Mammary epithelial cell (primary cell): ENCODE measurements at regions of chr12 and their contacts with region 1.

Region 1: DNA sequence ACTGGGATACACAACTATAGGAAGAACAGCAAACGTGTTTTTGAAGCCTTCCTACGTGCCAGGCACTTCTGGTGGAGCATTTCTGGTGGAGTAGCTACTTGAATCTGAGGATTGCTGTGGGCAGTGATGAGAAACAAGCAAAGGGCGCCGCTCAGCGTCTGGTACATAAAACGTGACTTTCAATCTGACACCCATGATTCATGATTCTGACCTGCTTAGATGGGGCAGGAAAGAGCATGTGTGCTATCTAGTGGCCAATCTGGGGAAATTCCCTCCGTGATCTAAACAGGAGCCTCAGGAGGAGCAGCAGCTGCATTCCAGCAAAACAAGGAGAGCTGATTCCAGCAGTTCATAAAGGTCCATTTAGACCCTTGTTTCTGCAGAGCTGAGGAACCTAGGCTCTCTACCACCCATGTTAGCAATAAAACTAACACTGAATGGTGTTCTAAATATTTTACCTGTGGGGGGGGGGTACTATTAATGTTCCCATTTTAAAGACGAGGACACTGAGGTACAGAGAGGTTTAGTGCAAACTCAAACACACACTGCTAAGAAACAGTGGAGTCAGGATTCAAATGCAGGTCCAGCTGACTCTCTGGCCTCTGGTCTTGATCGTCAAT is 37.8 kb downstream of the PAH start:
- DNase-seq: peak; percentile 79
- H3K4me3 ChIP-seq: no peak overlapping the region
- H3K27ac ChIP-seq: no peak overlapping the region
- H3K4me1 ChIP-seq: no peaks in the 10 kb centered on the region
- H3K27me3 ChIP-seq: peaks cover 2% of the 10 kb centered on the region
- CTCF ChIP-seq: peak; percentile 46 to 57

Region 2: GRCh38 chr12:101782273-101782731 is 1097.0 kb before region 1 on chr12:
- CTCF ChIA-PET with region 1: interaction called, 10 read pairs
- dilution Hi-C with region 1: no loop called
- in situ Hi-C with region 1: no loop called
- intact Hi-C with region 1: no loop called
- DNase-seq: no peak
- H3K4me3 ChIP-seq: no peak overlapping the region
- H3K27ac ChIP-seq: no peak overlapping the region
- H3K4me1 ChIP-seq: no peaks in the 10 kb centered on the region
- H3K27me3 ChIP-seq: no peaks in the 10 kb centered on the region
- CTCF ChIP-seq: no peak

Region 3: DNA sequence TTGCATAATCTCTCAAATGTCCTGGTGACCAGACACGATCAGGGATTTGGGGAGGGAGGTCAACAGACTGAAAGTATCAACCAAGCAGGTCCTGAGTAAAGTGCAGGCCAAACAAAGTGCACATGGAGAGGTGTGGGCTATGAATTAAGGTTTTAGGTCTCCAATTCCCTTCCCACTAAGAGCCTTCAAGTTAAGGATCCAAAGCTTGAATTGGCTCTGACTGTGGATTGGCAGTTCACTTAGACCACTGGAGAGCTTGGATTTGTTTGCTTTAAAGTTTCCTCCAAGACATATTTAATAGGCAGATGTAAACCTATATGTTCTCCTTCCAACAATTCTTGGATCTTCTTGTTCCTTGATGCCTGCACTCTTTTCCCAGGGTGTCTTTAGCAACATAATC is 269.3 kb before region 1 on chr12:
- CTCF ChIA-PET with region 1: no interaction called
- dilution Hi-C with region 1: no loop called
- in situ Hi-C with region 1: no loop called
- intact Hi-C with region 1: no loop called
- DNase-seq: no peak
- H3K4me3 ChIP-seq: no peak overlapping the region
- H3K27ac ChIP-seq: no peak overlapping the region
- H3K4me1 ChIP-seq: no peaks in the 10 kb centered on the region
- H3K27me3 ChIP-seq: no peaks in the 10 kb centered on the region
- CTCF ChIP-seq: no peak

Region 4: GRCh38 chr12:102993537-102993936 is 114.3 kb after region 1 on chr12:
- CTCF ChIA-PET with region 1: no interaction called
- dilution Hi-C with region 1: no loop called
- in situ Hi-C with region 1: no loop called
- intact Hi-C with region 1: no loop called
- DNase-seq: no peak
- H3K4me3 ChIP-seq: no peak overlapping the region
- H3K27ac ChIP-seq: no peak overlapping the region
- H3K4me1 ChIP-seq: no peaks in the 10 kb centered on the region
- H3K27me3 ChIP-seq: no peaks in the 10 kb centered on the region
- CTCF ChIP-seq: no peak

Region 5: GRCh38 chr12:103560604-103561573 is 681.6 kb after region 1 on chr12:
- CTCF ChIA-PET with region 1: no interaction called
- dilution Hi-C with region 1: no loop called
- in situ Hi-C with region 1: loop called in 1 of 2 experiments (anchors 10 kb)
- intact Hi-C with region 1: no loop called
- DNase-seq: peak; percentile 100
- H3K4me3 ChIP-seq: no peak overlapping the region
- H3K27ac ChIP-seq: peak overlapping the region; percentile 98
- H3K4me1 ChIP-seq: peaks cover 35% of the 10 kb centered on the region
- H3K27me3 ChIP-seq: no peaks in the 10 kb centered on the region
- CTCF ChIP-seq: no peak